SK-N-SH (cell line): ENCODE measurements at regions of chr1 and their contacts with region 1.

Region 1: DNA sequence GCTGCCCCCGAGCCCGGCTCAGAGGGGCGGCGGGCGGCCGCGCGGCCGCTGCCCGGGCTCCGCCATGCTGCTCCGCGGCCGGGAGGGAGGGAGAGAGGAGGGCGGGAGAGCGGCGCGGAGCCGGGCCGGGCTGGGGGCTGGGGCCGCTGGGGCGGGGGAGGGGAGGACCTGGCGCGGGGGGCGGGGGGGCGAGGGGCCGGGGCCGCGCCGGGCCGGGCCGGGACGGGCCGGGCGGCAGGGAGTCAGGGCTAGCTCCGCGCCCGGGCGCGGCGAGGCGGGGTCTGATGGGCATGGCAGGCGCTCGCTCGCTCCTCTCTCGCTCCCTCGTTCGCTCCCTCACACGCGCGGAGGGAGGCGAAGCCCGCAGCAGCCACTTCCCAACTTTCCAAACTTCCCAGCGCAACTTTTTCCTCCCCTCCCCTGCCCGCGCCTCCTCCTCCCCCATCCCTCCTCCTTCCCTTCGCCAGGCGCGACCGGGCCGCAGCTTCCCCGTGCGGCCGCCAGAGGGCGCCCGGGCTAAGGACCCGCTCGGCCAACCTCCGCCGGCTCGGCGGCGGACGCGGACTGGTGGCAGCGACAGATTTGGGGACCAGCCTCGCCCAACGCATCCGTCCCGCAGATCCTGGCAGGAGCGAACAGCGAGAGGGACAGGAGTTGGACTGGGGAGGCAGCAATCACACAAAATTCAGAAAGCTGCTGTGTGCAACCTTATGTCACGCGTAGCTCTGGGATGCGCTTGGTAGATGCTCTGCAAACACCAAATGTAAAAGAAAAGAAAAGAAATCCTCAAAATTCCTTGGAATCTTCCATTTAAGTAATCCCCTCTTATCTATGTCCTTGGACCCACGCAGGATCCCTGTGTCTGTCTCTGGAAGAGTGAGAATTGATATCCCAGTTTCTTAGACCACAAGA is at the start of gene TRABD2B:
- DNase-seq: peak; percentile 96
- H3K4me3 ChIP-seq: peak within 1 kb of the TSS; percentile 56 to 65
- H3K27ac ChIP-seq: no peak within 1 kb of the TSS
- H3K4me1 ChIP-seq: peaks cover 0 to 3% of the 10 kb centered on the region in 2 experiments; a peak in 1 of 4 replicates
- H3K27me3 ChIP-seq: peaks cover 4% of the 10 kb centered on the region; the same call in 1 of the 2 replicates
- CTCF ChIP-seq: peak; percentile 92
- EP300 ChIP-seq: no peak
- RAD21 ChIP-seq: peak; percentile 73
- polyA plus RNA-seq, gene TRABD2B: 0.02 and 0.03 TPM in 2 replicates

Region 2: GRCh38 chr1:47738560-47739182 is 258.9 kb before region 1 on chr1:
- CTCF ChIA-PET with region 1: interaction called, 17 read pairs
- POLR2A ChIA-PET with region 1: no interaction called
- DNase-seq: peak; percentile 74
- H3K4me3 ChIP-seq: no peak overlapping the region; a peak in 1 of 4 replicates
- H3K27ac ChIP-seq: no peak overlapping the region
- H3K4me1 ChIP-seq: no peaks in the 10 kb centered on the region
- H3K27me3 ChIP-seq: no peaks in the 10 kb centered on the region
- CTCF ChIP-seq: peak; percentile 70
- EP300 ChIP-seq: no peak
- RAD21 ChIP-seq: peak; percentile 89

Region 3: DNA sequence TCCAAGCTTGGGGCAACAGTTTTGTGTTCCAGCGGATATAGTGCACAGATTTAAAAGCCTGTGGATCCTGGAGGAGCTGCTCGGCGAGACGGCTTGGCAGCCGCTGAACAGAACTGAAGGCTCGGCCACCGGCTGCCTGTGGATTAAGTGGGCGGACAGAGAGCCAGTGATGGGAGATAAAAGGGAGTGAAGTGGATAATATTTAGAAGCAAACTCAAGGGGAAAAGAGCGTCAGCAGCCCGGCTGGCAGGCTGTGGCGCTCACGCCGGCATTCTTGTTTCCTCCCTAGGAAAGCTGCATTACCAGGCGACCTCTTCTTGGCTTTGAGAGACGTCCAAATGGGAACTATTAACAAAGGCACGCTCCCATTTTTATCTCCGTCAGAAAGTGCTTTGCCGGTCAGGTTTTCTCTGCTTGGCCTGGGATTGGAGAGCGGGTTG is 10.8 kb before region 1 on chr1:
- CTCF ChIA-PET with region 1: interaction called, 23 read pairs
- POLR2A ChIA-PET with region 1: no interaction called
- DNase-seq: peak; percentile 65
- H3K4me3 ChIP-seq: no peak overlapping the region
- H3K27ac ChIP-seq: no peak overlapping the region
- H3K4me1 ChIP-seq: peaks cover 0 to 3% of the 10 kb centered on the region in 2 experiments; a peak in 2 of 4 replicates
- H3K27me3 ChIP-seq: no peaks in the 10 kb centered on the region
- CTCF ChIP-seq: no peak
- EP300 ChIP-seq: no peak
- RAD21 ChIP-seq: no peak

Region 4: GRCh38 chr1:48039088-48040054 is 41.8 kb after region 1 on chr1:
- CTCF ChIA-PET with region 1: interaction called, 13 read pairs
- POLR2A ChIA-PET with region 1: no interaction called
- DNase-seq: no peak
- H3K4me3 ChIP-seq: no peak overlapping the region
- H3K27ac ChIP-seq: no peak overlapping the region
- H3K4me1 ChIP-seq: peaks cover 0 to 8% of the 10 kb centered on the region in 2 experiments; a peak in 1 of 4 replicates
- H3K27me3 ChIP-seq: no peaks in the 10 kb centered on the region
- CTCF ChIP-seq: no peak
- EP300 ChIP-seq: no peak
- RAD21 ChIP-seq: no peak

Region 5: GRCh38 chr1:48066936-48067335 is 69.4 kb after region 1 on chr1:
- CTCF ChIA-PET with region 1: interaction called, 92 read pairs
- POLR2A ChIA-PET with region 1: no interaction called
- DNase-seq: no peak
- H3K4me3 ChIP-seq: no peak overlapping the region
- H3K27ac ChIP-seq: no peak overlapping the region
- H3K4me1 ChIP-seq: no peaks in the 10 kb centered on the region; a peak in 1 of 4 replicates
- H3K27me3 ChIP-seq: no peaks in the 10 kb centered on the region
- CTCF ChIP-seq: no peak
- EP300 ChIP-seq: no peak
- RAD21 ChIP-seq: no peak

Region 6: DNA sequence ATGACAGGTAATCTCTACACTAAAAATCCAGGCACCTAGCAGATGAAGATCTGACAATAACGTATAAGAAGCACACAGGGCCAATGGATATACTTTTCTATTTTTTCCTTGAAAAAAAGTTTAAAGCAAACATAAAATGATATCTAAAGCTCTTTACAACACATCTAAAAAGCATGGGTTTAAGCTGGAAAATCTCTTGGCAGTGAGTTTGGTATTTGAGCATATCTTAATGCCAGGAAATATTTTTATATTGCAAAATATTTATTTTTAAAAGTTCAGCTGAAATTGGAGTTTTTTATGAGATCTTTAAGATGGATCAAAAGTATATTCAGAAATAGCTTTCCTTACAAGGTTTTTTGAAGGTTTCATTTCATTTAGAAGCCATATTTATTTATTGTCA is 265.5 kb after region 1 on chr1:
- CTCF ChIA-PET with region 1: no interaction called
- POLR2A ChIA-PET with region 1: no interaction called
- DNase-seq: no peak
- H3K4me3 ChIP-seq: no peak overlapping the region
- H3K27ac ChIP-seq: no peak overlapping the region
- H3K4me1 ChIP-seq: no peaks in the 10 kb centered on the region
- H3K27me3 ChIP-seq: no peaks in the 10 kb centered on the region
- CTCF ChIP-seq: no peak
- EP300 ChIP-seq: no peak
- RAD21 ChIP-seq: no peak